MCF 10A (cell line): ENCODE measurements at regions of chr6 and their contacts with region 1.

Region 1: DNA sequence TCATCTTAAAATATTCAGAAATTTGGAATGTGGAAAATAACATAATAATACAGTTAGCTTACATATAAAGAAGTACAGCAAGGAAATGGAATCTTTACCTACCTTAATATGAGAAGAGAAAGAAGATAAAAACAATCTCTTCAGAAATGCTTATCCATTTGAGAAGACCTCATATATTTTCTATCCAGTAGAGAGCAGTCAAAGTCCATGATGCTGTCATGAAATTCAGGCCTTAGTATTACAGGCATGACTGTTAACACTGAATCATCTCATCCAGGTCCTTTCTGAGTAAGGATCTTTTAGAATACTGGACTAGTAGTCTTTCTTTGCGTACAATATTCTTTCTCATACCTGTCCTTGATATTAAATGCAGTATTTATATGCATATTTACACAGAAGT is 713.4 kb downstream of the CD109 start:
- DNase-seq: peak; percentile 62
- H3K4me3 Mint-ChIP-seq: no peak overlapping the region
- H3K27ac Mint-ChIP-seq: no peak overlapping the region
- H3K4me1 Mint-ChIP-seq: no peaks in the 10 kb centered on the region
- H3K27me3 Mint-ChIP-seq: no peaks in the 10 kb centered on the region
- CTCF ChIP-seq: peak; percentile 70

Region 2: DNA sequence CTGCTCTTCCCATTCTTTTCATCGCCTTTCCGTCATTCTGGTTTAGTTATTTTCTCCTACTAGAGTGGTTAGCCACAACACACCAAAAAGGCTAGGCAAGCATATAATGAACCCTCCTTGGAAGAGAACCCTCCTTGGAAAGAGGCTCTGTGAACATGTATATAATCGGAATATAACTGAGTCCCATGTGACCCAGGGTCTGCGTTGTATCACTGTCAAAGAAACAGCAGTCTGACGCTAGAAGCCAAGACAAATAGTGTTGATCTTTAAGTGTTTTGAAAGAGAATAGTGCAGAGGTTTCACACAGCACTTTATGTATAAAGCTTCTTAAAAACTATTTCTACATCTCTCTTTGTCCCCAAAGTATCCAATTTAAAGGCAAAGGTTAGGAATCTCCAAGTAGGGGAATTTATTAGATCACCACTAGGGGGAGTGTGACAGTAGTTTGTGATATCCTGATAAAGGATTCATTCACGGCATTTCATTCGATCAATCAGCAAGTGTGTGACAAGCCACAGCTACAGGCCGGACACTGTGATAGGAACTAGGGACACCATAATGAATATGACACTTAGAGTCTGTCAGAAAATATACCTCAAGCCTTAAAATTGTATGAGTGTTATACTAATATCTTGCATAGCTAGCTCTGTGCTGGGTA is 318.2 kb before region 1 on chr6:
- CTCF ChIA-PET with region 1: interaction called, 11 read pairs
- POLR2A ChIA-PET with region 1: interaction called, 3 read pairs
- intact Hi-C with region 1: loop called (anchors 5 kb)
- DNase-seq: peak; percentile 68
- H3K4me3 Mint-ChIP-seq: no peak overlapping the region
- H3K27ac Mint-ChIP-seq: no peak overlapping the region
- H3K4me1 Mint-ChIP-seq: no peaks in the 10 kb centered on the region
- H3K27me3 Mint-ChIP-seq: no peaks in the 10 kb centered on the region
- CTCF ChIP-seq: peak; percentile 62

Region 3: GRCh38 chr6:74199215-74199915 is 210.1 kb before region 1 on chr6:
- CTCF ChIA-PET with region 1: no interaction called
- POLR2A ChIA-PET with region 1: no interaction called
- intact Hi-C with region 1: no loop called
- DNase-seq: no peak
- H3K4me3 Mint-ChIP-seq: no peak overlapping the region
- H3K27ac Mint-ChIP-seq: no peak overlapping the region
- H3K4me1 Mint-ChIP-seq: no peaks in the 10 kb centered on the region
- H3K27me3 Mint-ChIP-seq: no peaks in the 10 kb centered on the region
- CTCF ChIP-seq: no peak

Region 4: GRCh38 chr6:74879234-74879633 is 469.8 kb after region 1 on chr6:
- CTCF ChIA-PET with region 1: interaction called, 6 read pairs
- POLR2A ChIA-PET with region 1: no interaction called
- intact Hi-C with region 1: loop called (anchors 5 kb)
- DNase-seq: peak; percentile 90
- H3K4me3 Mint-ChIP-seq: peak overlapping the region; percentile 22
- H3K27ac Mint-ChIP-seq: peak overlapping the region; percentile 92
- H3K4me1 Mint-ChIP-seq: peaks cover 19% of the 10 kb centered on the region
- H3K27me3 Mint-ChIP-seq: no peaks in the 10 kb centered on the region
- CTCF ChIP-seq: no peak

Region 5: DNA sequence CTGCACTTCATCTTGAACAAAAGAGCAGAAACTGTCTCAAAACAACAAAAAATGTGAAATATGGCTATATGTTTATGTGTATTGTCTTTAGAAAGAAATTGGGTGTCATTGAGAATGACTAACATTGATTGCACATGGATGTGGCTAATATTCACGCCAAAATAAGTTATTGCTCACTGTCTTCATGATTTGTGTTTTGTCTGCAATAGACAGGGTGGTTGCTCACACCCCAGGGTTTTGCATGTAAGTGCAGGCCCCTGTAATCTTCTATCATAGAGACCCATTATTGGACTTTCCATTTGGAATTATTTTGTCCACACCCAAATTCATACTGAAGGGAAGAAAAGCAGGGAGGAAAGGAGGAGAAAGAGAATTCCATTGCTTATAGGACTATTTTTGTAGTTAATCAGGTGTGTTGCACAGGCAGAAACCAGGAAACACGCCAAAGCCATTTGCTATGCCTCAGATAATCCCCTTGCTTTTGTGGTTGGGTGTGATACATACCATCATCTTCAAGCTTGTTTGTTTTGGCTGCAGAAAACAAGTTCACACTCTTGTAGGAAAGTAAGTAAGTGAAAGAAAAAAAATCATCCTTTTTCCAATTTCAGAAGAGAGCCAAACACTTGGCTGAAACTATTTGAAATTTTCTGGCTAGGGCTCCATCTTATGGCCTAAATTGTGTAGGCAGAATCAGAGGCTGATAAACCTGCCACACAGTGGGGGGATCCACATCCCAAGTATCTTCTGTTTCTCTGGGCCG is 582.3 kb after region 1 on chr6:
- CTCF ChIA-PET with region 1: interaction called, 11 read pairs
- POLR2A ChIA-PET with region 1: no interaction called
- intact Hi-C with region 1: loop called (anchors 1 kb)
- DNase-seq: peak; percentile 73
- H3K4me3 Mint-ChIP-seq: no peak overlapping the region
- H3K27ac Mint-ChIP-seq: peak overlapping the region; percentile 32
- H3K4me1 Mint-ChIP-seq: peaks cover 27% of the 10 kb centered on the region
- H3K27me3 Mint-ChIP-seq: no peaks in the 10 kb centered on the region
- CTCF ChIP-seq: peak; percentile 33

Region 6: GRCh38 chr6:75012018-75012529 is 602.6 kb after region 1 on chr6:
- CTCF ChIA-PET with region 1: no interaction called
- POLR2A ChIA-PET with region 1: no interaction called
- intact Hi-C with region 1: no loop called
- DNase-seq: no peak
- H3K4me3 Mint-ChIP-seq: no peak overlapping the region
- H3K27ac Mint-ChIP-seq: no peak overlapping the region
- H3K4me1 Mint-ChIP-seq: no peaks in the 10 kb centered on the region
- H3K27me3 Mint-ChIP-seq: no peaks in the 10 kb centered on the region
- CTCF ChIP-seq: no peak

Region 7: DNA sequence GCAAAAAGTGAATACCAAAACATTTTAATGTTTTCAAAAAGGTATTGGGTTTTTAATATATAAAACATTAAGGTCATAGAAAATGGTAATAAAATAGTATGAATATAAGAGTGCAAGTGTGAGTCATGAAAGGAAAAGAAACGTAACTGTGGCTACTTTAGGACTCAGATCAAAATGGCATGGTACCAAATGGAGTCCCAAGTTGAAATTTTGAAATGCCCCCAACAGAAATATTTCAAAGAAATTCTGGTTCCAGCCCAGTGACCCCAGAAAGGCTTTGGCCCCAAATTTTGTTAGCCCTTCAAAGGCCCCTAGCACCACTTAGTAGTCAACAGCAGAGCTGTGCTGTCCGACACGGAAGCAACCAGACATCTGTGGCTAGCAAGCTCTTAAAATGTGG is 790.4 kb after region 1 on chr6:
- CTCF ChIA-PET with region 1: interaction called, 132 read pairs
- POLR2A ChIA-PET with region 1: interaction called, 31 read pairs
- intact Hi-C with region 1: loop called (anchors 1 kb)
- DNase-seq: no peak
- H3K4me3 Mint-ChIP-seq: no peak overlapping the region
- H3K27ac Mint-ChIP-seq: no peak overlapping the region
- H3K4me1 Mint-ChIP-seq: peaks cover 30% of the 10 kb centered on the region
- H3K27me3 Mint-ChIP-seq: no peaks in the 10 kb centered on the region
- CTCF ChIP-seq: no peak